Right ventricle myocardium superior (tissue), 1 donor: ENCODE measurements at regions of chr22 and their contacts with region 1.

Region 1: DNA sequence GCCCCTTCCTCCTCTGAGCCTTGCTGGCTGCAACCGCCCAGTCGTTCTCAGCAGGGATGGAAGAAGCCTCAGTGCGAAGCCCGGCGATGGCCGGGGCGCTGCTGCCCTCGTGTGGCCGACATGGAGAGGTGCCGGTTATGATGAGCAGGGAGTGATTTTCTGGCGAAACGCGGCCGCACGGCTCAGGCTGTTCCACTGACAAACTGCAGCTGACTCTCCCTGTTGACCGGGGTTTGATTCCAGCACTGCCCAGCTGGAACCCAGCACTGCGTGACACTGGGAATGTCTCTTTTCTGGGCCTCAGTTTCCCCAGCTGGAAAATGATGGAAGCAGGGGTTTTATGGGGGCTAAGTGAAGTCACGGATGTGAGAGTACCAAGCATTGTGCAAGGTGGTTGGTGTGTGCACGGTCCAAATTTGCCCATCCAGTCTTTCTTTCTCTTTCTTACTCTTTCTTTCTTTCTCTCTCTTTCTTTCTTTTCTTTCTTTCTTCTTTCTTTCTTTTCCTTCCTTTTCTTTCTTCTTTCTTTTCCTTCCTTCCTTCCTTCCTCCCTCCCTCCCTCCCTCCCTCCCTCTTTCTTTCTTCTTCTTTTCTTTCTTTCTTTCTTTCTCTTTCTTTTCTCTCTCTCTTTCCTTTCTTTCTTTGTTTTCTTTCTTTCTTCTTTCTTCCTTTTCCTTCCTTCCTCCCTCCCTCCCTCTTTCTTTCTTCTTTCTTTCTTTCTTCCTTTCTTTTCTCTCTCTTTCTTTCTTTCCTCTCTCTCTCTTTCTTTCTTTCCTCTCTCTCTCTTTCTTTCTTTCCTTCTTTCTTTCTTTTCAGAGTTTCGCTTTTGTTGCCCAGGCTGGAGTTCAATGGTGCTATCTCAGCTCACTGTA is 25.8 kb upstream of the MPPED1 start:
- DNase-seq: peak; percentile 86
- ATAC-seq: peak; percentile 95

Region 2: DNA sequence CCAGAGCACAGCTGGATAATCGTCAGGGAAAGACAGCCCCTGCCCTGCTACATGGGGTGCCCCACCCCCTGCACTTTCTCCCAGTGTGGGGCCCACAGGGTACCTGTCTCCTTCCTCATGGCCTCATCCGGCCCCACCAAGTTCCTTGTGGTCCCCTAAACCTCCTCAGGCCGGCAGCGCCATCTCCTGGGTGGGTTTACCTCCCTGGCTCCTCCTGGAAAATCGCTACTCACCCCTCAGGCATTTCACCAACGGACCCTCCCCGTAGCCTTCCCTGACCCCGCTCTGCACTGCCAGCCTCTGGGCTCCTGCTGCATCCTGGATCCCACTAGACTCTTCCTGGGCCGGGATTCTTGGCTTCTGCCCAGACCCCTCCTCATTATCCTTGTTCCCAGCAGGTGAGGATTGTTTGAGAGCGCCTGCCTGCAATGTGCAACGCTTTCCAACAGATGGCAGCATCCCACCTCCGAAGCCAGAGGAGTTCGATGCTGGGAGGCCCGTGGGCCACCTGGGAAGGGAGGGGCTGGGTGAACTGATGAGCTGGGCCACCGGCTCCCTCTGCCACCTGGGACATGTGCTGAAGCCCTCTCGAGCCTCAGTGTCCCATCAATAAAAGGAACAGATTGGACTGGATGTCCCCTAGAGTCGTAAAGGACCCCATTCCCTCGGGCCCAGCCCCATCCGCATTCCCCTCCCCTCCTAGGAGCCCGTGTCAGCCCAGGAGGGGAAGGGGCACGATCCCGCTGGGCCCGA is 154.9 kb before region 1 on chr22:
- intact Hi-C with region 1: loop called (anchors 5 kb)
- DNase-seq: peak; percentile 64
- ATAC-seq: peak; percentile 39

Region 3: DNA sequence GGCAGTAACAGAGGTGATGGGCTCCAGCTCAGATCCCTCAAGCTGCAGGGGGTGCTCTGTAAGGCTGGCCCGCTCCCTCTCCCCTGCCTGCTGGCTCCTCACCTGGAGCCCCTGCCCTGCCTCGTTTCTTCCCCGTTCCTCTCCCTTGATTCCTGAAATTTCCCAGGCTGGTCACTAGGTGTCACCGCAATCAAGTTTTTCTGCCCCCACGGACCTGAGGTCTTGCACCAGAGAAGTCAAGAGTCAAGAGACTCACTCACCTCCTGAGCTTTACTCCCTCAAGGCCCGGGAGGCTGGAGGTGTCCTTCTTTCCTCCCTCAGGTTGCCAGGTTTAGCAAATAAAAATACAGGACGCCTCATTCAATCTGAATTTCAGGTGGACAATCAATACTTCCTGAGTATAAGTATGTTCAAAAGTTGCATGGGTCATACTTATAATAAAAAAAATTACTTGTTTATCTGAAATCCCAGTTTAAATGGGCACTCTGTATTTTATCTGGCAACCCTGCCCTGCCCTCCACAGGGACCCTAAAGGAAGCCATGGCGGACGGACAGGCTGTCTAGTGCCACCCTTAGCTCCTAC is 112.0 kb before region 1 on chr22:
- intact Hi-C with region 1: loop called (anchors 5 kb)
- DNase-seq: no peak
- ATAC-seq: peak; percentile 85

Region 4: DNA sequence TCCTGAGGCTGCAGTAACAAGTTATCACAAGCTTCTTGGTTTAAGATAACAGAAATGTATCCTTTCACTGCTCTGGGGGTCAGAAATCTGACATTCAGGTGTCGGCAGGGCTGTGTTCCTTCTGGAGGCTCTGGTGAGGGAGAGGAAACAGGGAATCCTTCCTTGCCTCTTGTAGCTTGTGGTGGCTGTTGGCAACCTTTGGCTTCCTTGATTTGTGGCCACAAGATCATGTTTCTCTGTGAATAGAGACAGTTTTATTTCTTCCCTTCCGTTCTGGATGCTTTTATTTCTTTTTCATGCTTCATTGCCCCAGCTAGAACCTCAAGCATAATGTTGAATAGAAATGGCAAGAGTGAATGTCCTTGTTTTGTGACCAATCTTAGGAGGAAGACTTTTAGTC is 69.8 kb after region 1 on chr22:
- intact Hi-C with region 1: no loop called
- DNase-seq: no peak
- ATAC-seq: no peak

Region 5: GRCh38 chr22:43726322-43726721 is 340.3 kb after region 1 on chr22:
- intact Hi-C with region 1: no loop called
- DNase-seq: no peak
- ATAC-seq: peak; percentile 90

Region 6: GRCh38 chr22:43826142-43827002 is 440.4 kb after region 1 on chr22:
- intact Hi-C with region 1: loop called (anchors 10 kb)
- DNase-seq: no peak
- ATAC-seq: no peak